Heart right ventricle (tissue), 16 donors: ENCODE measurements at regions of chr9 and their contacts with region 1.

Region 1: DNA sequence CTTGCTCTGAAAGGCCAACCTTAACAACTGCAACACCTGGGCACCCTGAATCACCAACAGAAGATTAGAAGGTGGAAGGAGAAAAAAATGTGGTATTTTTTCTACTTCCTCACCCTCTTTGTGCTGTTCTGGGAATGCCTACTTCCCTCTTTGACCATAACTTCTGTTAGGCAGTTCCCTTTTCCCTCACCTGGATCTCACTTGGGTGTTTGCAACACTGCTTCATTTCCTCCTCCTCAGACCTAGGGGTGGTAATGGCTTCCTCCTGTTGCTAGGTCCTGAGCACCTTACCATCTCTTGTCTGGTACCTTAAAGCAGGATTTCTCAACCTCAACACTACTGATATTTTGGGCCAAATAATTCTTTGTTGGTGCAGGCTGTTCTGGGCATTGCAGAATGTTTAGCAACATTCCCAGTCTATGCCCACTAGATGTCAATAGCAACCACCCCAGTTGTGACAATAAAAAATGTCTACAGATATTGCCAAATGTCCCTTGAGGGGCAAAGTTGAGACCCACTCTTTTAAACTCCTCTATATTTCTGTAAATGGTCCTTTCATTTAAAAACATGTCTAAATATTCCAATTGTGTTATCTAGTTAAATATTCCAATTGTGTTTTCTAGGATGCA is 299.9 kb upstream of the VLDLR start:
- DNase-seq: no peak
- ATAC-seq: peak in 1 of 8 donors; percentile 42
- H3K4me3 ChIP-seq: no peak overlapping the region
- H3K27ac ChIP-seq: no peak overlapping the region
- H3K4me1 ChIP-seq: no peaks in the 10 kb centered on the region
- H3K27me3 ChIP-seq: no peaks in the 10 kb centered on the region
- CTCF ChIP-seq: peak in 7 of 9 donors; percentile 25 to 48 (median 33)

Region 2: DNA sequence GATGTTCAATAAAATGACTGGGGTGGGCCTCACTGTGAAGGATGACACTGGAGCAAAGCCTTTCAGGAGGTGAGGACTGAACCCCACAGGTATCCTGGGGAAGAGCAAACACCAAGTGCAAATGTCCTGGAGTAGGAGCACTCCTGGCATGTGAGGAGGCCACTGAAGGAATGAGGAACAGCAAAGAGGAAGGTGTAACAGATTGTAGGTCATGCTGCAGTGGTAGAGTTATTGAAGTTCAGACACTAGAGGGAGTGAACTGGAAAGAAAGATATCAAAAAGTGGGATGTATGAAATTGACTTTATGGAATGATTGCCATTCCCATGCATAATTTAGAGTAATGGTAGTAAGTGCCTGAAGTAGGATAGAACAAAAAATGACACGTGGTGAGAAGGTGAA is 417.4 kb after region 1 on chr9:
- intact Hi-C with region 1: loop called in 1 of 10 experiments (anchors 10 kb)
- DNase-seq: no peak
- ATAC-seq: no peak
- H3K4me3 ChIP-seq: no peak overlapping the region
- H3K27ac ChIP-seq: no peak overlapping the region
- H3K4me1 ChIP-seq: peaks cover 0 to 7% (median 0%) of the 10 kb centered on the region in 9 donors
- H3K27me3 ChIP-seq: no peaks in the 10 kb centered on the region
- CTCF ChIP-seq: peak in 1 of 9 donors; percentile 5